Calu3 (cell line): ENCODE measurements at regions of chr16 and their contacts with region 1.

Region 1: DNA sequence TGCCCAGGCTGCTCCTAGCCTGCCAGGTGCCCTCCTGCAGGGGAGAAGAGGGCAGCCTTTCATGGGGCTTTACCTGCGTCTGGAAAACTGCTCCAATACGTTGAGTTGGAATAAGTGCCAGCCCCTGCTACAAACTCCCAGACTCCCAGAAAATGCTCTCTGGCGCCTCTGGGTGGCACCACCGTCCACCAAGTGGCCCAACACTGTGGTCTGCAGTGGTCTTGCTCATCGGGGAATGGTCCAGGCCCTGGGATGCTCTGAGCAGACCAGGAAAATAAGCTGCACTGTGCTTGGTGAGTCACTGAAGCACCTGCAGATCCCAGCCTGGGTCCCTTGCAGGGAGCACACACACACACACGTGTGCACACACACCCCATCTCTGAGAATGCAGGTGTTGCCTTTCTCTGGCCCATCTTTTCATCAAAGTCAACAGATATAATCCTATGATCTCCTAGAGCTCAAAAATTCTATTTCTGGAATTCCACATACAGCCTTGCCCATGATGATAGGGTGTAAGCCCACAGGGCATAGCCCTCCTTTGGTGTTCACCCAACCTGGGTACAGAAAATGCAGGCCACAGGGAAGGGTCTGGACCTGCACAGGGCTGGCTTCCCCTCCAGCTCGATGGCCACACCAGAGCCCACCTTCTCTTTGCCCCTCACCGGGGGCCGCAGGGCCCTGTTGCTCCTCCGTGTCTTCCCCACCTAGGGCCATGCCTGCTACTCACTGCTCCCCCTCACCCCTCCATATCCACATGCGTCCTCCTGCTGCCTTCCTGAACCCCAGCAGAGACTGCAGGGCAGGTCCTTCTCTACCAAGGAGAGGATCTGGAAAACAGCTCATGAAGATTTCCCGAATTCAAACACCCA is 20.5 kb downstream of the CDIP1 start:
- DNase-seq: peak; percentile 55
- H3K4me3 Mint-ChIP-seq: no peak overlapping the region
- H3K27ac Mint-ChIP-seq: no peak overlapping the region
- H3K4me1 Mint-ChIP-seq: no peaks in the 10 kb centered on the region
- H3K27me3 Mint-ChIP-seq: no peaks in the 10 kb centered on the region
- CTCF ChIP-seq: peak; percentile 57

Region 2: GRCh38 chr16:4586291-4586690 is 68.2 kb after region 1 on chr16:
- CTCF ChIA-PET with region 1: interaction called, 4 read pairs
- intact Hi-C with region 1: loop called (anchors 5 kb)
- DNase-seq: no peak
- H3K4me3 Mint-ChIP-seq: no peak overlapping the region
- H3K27ac Mint-ChIP-seq: no peak overlapping the region
- H3K4me1 Mint-ChIP-seq: no peaks in the 10 kb centered on the region
- H3K27me3 Mint-ChIP-seq: peaks cover 47% of the 10 kb centered on the region
- CTCF ChIP-seq: no peak